Heart right ventricle (tissue), 16 donors: ENCODE measurements at regions of chr13 and their contacts with region 1.

Region 1: GRCh38 chr13:27117158-27117557 is 54.5 kb downstream of the USP12 start:
- DNase-seq: no peak
- ATAC-seq: no peak
- H3K4me3 ChIP-seq: no peak overlapping the region
- H3K27ac ChIP-seq: no peak overlapping the region
- H3K4me1 ChIP-seq: peaks cover 0 to 53% (median 27%) of the 10 kb centered on the region in 9 donors
- H3K27me3 ChIP-seq: no peaks in the 10 kb centered on the region
- CTCF ChIP-seq: no peak

Region 2: GRCh38 chr13:27053902-27054595 is 63.1 kb before region 1 on chr13:
- intact Hi-C with region 1: loop called in 1 of 10 experiments (anchors 2 kb)
- DNase-seq: no peak
- ATAC-seq: no peak
- H3K4me3 ChIP-seq: no peak overlapping the region
- H3K27ac ChIP-seq: no peak overlapping the region
- H3K4me1 ChIP-seq: peaks cover 0 to 7% (median 0%) of the 10 kb centered on the region in 9 donors
- H3K27me3 ChIP-seq: no peaks in the 10 kb centered on the region
- CTCF ChIP-seq: no peak

Region 3: DNA sequence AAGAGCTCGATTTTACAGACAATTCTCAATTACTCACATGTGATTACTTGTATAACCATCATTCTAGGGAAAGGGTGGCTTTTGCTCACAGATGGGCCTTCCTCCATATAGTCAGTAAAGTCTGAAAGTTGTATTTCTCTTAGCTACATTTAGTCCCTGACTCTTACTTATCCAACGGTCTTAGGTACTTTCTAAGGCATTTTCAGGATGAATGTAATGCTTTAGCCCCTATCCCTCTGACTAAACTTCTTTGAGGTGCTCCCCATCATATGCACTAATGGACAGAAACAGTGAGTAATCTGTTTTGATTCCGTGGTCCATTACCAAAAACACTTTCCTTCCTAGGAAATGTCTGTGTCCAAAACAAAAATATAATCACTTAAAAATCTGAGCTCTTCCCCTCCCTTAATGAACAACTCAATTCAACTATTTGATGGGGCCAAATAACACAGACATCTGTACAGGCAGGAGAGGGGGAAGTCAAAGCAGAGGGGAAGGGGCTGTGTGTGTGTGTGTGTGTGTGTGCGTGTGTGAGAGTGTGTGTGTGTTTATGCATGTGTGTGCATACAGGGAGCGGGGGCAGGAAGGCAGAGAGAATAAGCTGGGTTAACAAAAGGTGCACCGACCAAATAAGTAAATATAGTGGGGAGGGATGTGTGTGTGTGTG is 30.4 kb before region 1 on chr13:
- intact Hi-C with region 1: no loop called
- DNase-seq: no peak
- ATAC-seq: no peak
- H3K4me3 ChIP-seq: no peak overlapping the region
- H3K27ac ChIP-seq: no peak overlapping the region
- H3K4me1 ChIP-seq: no peaks in the 10 kb centered on the region
- H3K27me3 ChIP-seq: no peaks in the 10 kb centered on the region
- CTCF ChIP-seq: no peak

Region 4: DNA sequence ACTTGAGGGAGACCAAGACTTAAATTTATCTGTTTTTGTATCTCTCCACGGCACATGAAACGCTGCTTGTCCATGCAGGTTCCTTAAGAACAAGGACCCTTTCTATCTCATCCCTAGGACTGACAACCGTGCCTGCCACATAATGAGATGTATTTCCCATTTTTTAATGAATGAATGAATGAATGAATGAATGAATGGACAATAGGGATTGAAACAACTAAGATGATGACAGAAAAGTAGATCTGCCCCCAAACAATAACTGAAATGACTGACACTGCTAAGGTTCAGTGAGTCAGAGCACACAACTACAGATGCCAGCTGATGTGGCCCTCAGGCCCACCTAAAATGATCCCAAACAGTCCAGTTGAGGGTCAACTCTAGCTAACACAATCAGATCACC is 15.3 kb before region 1 on chr13:
- intact Hi-C with region 1: loop called in 1 of 10 experiments (anchors 1 kb)
- DNase-seq: no peak
- ATAC-seq: no peak
- H3K4me3 ChIP-seq: no peak overlapping the region
- H3K27ac ChIP-seq: no peak overlapping the region
- H3K4me1 ChIP-seq: peaks cover 0 to 12% (median 0%) of the 10 kb centered on the region in 9 donors
- H3K27me3 ChIP-seq: no peaks in the 10 kb centered on the region
- CTCF ChIP-seq: no peak